ENCODE measurements at regions of chr5 and their contacts with region 1.

Region 1: GRCh38 chr5:142167458-142167857 is 58.9 kb downstream of the NDFIP1 start:
- DNase-seq: no peak
- ATAC-seq: no peak
- H3K4me3 ChIP-seq: no peak overlapping the region
- H3K27ac ChIP-seq: no peak overlapping the region
- H3K4me1 ChIP-seq: peaks cover 66% of the 10 kb centered on the region
- H3K27me3 ChIP-seq: no peaks in the 10 kb centered on the region
- CTCF ChIP-seq: no peak
- EP300 ChIP-seq: no peak
- POLR2A ChIP-seq: no peak
- RAD21 ChIP-seq: no peak

Region 2: GRCh38 chr5:142151436-142152383 is 15.7 kb before region 1 on chr5:
- CTCF ChIA-PET with region 1: no interaction called
- POLR2A ChIA-PET with region 1: no interaction called
- in situ Hi-C with region 1: no loop called
- intact Hi-C with region 1: no loop called
- DNase-seq: peak; percentile 48
- ATAC-seq: peak; percentile 53
- H3K4me3 ChIP-seq: no peak overlapping the region
- H3K27ac ChIP-seq: no peak overlapping the region
- H3K4me1 ChIP-seq: peaks cover 25% of the 10 kb centered on the region
- H3K27me3 ChIP-seq: no peaks in the 10 kb centered on the region
- CTCF ChIP-seq: peak; percentile 75
- EP300 ChIP-seq: no peak
- POLR2A ChIP-seq: no peak
- RAD21 ChIP-seq: peak; percentile 73

Region 3: GRCh38 chr5:142186857-142187594 is 19.6 kb after region 1 on chr5:
- CTCF ChIA-PET with region 1: no interaction called
- POLR2A ChIA-PET with region 1: no interaction called
- in situ Hi-C with region 1: no loop called
- intact Hi-C with region 1: no loop called
- DNase-seq: peak; percentile 38
- ATAC-seq: peak; percentile 61
- H3K4me3 ChIP-seq: peak overlapping the region in 1 of 3 experiments; percentile 39; a peak in 2 of 6 replicates
- H3K27ac ChIP-seq: no peak overlapping the region
- H3K4me1 ChIP-seq: peaks cover 61% of the 10 kb centered on the region
- H3K27me3 ChIP-seq: peaks cover 0 to 8% of the 10 kb centered on the region in 2 experiments; a peak in 1 of 5 replicates
- CTCF ChIP-seq: no peak
- EP300 ChIP-seq: no peak
- POLR2A ChIP-seq: no peak
- RAD21 ChIP-seq: no peak

Region 4: GRCh38 chr5:142364251-142365145 is 197.0 kb after region 1 on chr5:
- CTCF ChIA-PET with region 1: no interaction called
- POLR2A ChIA-PET with region 1: no interaction called
- in situ Hi-C with region 1: no loop called
- intact Hi-C with region 1: loop called (anchors 5 kb)
- DNase-seq: no peak
- ATAC-seq: no peak
- H3K4me3 ChIP-seq: no peak overlapping the region
- H3K27ac ChIP-seq: peak overlapping the region; percentile 82
- H3K4me1 ChIP-seq: peaks cover 53% of the 10 kb centered on the region
- H3K27me3 ChIP-seq: no peaks in the 10 kb centered on the region
- CTCF ChIP-seq: no peak
- EP300 ChIP-seq: no peak
- POLR2A ChIP-seq: no peak
- RAD21 ChIP-seq: no peak